ENCODE measurements at regions of chr1 and their contacts with region 1.

Region 1: DNA sequence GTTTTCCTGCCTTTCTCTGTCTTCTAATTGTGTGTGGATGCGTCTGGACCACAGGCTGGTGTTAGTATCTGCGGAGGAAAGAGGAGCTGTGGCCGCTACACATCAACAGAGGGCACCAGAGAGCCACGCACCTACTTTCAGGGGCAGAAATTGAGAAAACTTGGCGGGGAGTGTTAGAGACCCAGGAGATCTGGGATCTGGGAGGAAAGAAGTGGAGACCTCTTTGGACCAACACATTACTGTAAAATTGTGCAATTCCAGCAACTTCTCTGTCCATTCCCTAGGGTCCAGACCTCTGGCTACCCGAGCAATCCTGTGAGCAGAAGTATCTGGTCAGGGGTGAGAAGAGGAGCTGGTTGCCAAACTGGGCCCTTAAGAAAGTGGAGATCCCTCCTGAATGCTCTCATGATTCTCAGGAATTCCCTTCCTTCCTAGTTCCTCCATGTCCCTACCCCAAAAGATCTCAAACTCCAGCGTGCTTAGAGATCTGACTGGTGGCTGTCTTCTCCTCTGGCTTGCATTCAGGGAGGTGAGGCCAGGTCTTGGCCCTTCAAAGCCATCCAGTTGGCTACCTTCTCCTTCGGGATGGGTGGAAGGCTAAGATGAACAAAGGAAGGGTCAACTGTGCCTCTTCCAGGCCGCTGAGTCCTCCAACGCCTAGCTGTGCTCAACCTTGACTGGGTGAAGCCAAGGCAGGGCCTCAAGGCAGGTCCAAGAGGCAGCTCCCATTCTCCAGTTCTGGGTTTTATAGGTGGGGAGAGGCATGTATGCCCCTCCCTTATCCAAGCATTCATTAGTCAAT is 1.2 kb upstream of the KIRREL1 start:
- DNase-seq: peak in 1 of 2 donors; percentile 89
- H3K4me3 ChIP-seq: peak overlapping the region in 1 of 2 donors; percentile 94
- H3K27ac ChIP-seq: peak overlapping the region; percentile 97
- H3K4me1 ChIP-seq: peaks cover 5 to 30% of the 10 kb centered on the region in 2 donors
- H3K27me3 ChIP-seq: no peaks in the 10 kb centered on the region
- CTCF ChIP-seq: peak; percentile 84 to 97 (median 94)

Region 2: DNA sequence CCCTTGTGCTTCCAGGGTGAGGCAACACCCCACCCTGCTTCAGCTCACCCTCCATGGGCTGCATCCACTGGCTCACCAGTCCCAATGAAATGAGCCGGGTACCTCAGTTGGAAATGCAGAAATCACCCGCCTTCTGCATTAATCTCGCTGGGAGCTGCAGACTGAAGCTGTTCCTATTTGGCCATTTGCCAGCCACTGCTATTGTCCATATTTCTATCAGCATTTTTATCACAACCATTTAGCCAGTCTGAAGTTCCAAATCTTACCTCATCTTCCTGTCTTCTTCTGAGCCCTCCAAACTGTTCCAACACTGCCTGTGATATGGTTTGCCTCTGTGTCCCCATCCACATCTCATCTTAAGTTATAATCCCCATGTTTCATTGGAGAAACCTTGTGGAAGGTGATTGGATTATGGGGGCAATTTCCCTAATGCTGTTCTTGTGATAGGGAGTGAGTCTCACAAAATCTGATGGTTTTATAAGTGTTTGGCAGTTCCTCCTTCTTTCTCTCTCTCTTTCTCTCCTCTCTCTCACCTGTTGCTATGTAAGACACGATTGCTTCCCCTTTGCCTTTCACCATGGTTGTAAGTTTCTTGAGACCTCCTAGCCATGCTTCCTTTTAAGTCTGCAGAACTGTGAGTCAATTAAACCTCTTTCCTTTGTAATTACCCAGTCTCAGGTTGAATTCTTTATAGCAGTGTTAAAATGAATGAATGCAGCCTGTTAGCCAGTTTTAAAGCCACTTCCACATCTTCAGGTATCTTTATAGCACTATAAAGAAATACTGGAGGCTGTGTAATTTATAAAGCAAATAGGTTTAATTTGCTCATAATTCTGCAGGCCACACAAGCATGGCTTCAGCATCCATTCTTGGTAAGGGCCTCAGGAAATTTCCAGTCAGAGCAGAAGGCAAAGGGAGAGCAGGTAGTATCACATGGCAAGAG is 643.4 kb before region 1 on chr1:
- intact Hi-C with region 1: no loop called
- DNase-seq: no peak
- H3K4me3 ChIP-seq: no peak overlapping the region
- H3K27ac ChIP-seq: no peak overlapping the region
- H3K4me1 ChIP-seq: no peaks in the 10 kb centered on the region
- H3K27me3 ChIP-seq: no peaks in the 10 kb centered on the region
- CTCF ChIP-seq: no peak

Region 3: GRCh38 chr1:157806431-157807149 is 185.6 kb before region 1 on chr1:
- intact Hi-C with region 1: no loop called
- DNase-seq: no peak
- H3K4me3 ChIP-seq: no peak overlapping the region
- H3K27ac ChIP-seq: no peak overlapping the region
- H3K4me1 ChIP-seq: no peaks in the 10 kb centered on the region
- H3K27me3 ChIP-seq: no peaks in the 10 kb centered on the region
- CTCF ChIP-seq: no peak

Region 4: DNA sequence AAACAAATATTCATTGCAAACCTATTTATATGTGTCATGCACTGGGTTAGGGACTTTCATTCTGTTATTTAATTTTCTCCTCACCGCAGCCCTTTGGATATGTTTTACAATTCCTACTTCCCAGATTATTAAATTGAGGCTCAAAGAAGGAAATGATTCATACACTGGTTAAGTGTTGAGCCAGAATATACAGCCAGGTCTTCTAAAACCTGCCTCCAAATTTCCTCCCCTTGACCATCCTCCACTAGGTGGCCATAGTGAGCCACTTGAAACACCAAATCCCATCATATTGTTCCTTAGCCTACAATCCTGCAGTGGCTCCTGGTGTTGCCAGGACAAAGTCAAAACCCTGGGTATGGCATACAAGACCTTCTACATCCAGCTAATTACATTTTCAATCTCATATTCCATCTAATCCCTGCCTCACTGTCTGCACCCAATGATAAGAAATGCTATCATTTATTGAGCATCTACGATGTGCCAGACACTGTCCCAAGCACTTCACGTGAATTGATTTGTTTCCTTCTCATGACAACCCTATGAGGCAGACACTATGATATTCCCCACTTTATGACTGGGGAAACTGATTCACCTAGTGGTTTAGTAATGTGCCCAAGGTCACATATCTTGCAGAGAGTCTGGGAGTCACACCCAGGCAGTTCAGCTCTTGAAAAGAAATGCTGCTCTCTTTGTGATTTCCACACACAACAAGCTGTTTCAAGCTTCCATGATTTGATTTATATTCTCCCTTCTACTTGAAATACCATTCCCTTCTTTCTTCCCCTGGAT is 22.3 kb before region 1 on chr1:
- intact Hi-C with region 1: loop called (anchors 2 kb)
- DNase-seq: peak in 1 of 2 donors; percentile 82
- H3K4me3 ChIP-seq: no peak overlapping the region
- H3K27ac ChIP-seq: peak overlapping the region; percentile 32 to 55
- H3K4me1 ChIP-seq: peaks cover 11 to 12% of the 10 kb centered on the region in 2 donors
- H3K27me3 ChIP-seq: no peaks in the 10 kb centered on the region
- CTCF ChIP-seq: peak; percentile 55 to 78 (median 65)

Region 5: GRCh38 chr1:158011714-158012113 is 19.5 kb after region 1 on chr1:
- intact Hi-C with region 1: loop called (anchors 1 kb)
- DNase-seq: no peak
- H3K4me3 ChIP-seq: no peak overlapping the region
- H3K27ac ChIP-seq: peak overlapping the region; percentile 92 to 99
- H3K4me1 ChIP-seq: peaks cover 41 to 90% of the 10 kb centered on the region in 2 donors
- H3K27me3 ChIP-seq: no peaks in the 10 kb centered on the region
- CTCF ChIP-seq: no peak

Region 6: DNA sequence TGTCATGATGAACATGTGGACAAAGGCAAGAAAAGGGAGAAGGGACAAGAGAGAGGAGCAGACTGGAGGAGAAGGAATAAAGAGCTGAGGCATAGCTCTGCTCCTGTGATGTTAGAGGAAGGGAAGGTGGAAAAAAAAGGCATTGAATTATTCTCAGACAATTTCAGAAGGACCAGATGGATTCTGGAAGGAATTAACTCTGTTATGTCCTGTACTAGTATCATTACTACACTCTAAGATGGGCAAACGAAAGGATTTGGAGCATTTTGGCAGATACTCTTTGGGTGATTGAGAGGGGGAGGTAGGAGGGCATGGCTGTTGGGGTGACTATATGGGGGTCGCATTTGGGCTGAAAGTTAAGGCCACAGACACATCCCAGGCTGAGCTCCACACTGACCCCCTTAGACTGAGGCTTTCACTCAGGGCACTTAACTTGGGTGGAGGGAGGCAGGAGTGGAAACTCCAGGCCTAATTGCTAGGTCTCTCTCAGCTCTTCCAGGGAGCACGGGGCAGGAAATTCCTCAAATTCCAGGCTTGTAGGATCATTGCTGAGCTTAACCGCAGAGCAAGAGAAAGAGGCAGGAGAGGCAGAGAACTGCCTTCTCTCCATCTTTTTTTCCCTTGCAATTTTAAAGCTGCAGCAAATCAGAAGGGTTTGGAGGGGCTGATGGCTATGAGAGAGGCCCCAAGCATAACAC is 27.1 kb after region 1 on chr1:
- intact Hi-C with region 1: loop called (anchors 1 kb)
- DNase-seq: peak in 1 of 2 donors; percentile 89
- H3K4me3 ChIP-seq: peak overlapping the region; percentile 42 to 52
- H3K27ac ChIP-seq: peak overlapping the region; percentile 92 to 99
- H3K4me1 ChIP-seq: peaks cover 54 to 87% of the 10 kb centered on the region in 2 donors
- H3K27me3 ChIP-seq: no peaks in the 10 kb centered on the region
- CTCF ChIP-seq: no peak

Region 7: DNA sequence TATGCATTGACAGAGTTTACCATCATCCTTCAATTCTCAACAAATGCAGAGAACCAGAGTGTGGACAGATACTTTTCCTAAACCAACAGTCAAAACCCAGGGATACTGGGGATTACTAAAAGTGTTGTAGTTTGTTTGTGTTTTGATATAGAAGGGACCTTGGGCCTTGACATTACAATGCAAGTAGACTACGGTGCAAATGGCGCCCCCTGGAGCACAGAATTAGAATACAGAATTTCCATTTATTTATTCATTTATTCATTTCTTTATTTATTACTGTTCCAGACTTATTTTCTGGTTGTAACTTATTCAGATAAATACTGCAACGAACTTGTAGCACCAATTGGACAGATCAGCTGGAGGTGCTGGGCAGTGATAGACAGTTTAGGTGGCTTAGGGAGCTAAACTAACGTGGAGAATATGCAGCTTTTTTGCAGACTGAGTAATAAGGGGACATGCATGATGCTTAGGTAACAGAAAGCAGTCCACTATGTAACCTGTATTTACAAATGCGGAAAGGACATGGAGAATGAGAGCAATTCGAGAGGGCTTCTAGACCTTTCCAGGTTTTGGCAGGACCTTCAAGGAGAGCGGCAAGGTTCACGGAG is 43.8 kb after region 1 on chr1:
- intact Hi-C with region 1: loop called (anchors 1 kb)
- DNase-seq: no peak
- H3K4me3 ChIP-seq: no peak overlapping the region
- H3K27ac ChIP-seq: peak overlapping the region; percentile 15 to 37
- H3K4me1 ChIP-seq: peaks cover 6 to 23% of the 10 kb centered on the region in 2 donors
- H3K27me3 ChIP-seq: no peaks in the 10 kb centered on the region
- CTCF ChIP-seq: peak; percentile 62 to 82 (median 65)

Region 8: DNA sequence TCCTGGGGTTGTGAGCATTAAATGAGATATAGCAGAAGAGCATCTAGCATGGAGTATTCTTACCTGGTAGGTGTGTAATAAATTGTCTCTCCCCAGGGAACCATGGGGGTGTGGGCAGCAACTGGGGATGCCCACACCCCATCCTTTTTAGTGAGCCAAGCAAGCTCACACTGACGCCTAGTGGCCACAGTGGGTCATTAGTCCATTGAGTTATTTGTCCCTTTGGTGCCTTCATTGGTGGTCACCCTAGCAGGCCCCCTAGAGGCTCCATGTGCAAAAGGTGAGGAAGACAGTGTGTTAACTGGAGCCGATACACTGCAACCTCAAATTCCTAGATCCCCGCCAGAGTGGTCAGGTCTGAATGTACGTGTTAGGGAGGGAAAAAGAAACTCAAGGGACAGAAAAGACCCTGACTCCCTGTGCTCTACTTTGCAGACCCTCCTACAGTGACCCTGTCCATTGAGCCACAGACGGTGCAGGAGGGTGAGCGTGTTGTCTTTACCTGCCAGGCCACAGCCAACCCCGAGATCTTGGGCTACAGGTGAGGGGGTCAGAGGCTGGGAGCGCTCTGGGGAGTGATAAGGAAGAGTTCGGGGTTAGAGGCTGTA is 95.2 kb after region 1 on chr1:
- intact Hi-C with region 1: loop called (anchors 1 kb)
- DNase-seq: peak in 1 of 2 donors; percentile 77
- H3K4me3 ChIP-seq: no peak overlapping the region
- H3K27ac ChIP-seq: no peak overlapping the region
- H3K4me1 ChIP-seq: no peaks in the 10 kb centered on the region
- H3K27me3 ChIP-seq: no peaks in the 10 kb centered on the region
- CTCF ChIP-seq: peak; percentile 68 to 85 (median 80)

Region 9: GRCh38 chr1:158124999-158125398 is 132.8 kb after region 1 on chr1:
- intact Hi-C with region 1: loop called (anchors 2 kb)
- DNase-seq: peak; percentile 73 to 97
- H3K4me3 ChIP-seq: peak overlapping the region in 1 of 2 donors; percentile 11
- H3K27ac ChIP-seq: no peak overlapping the region
- H3K4me1 ChIP-seq: no peaks in the 10 kb centered on the region
- H3K27me3 ChIP-seq: no peaks in the 10 kb centered on the region
- CTCF ChIP-seq: peak; percentile 92 to 93 (median 93)